Posterior cingulate gyrus (tissue), 11 donors: ENCODE measurements at regions of chr14 and their contacts with region 1.

Region 1: GRCh38 chr14:67695394-67695949 is at the start of gene RDH11:
- DNase-seq: peak; percentile 82 to 98 (median 90)

Region 2: DNA sequence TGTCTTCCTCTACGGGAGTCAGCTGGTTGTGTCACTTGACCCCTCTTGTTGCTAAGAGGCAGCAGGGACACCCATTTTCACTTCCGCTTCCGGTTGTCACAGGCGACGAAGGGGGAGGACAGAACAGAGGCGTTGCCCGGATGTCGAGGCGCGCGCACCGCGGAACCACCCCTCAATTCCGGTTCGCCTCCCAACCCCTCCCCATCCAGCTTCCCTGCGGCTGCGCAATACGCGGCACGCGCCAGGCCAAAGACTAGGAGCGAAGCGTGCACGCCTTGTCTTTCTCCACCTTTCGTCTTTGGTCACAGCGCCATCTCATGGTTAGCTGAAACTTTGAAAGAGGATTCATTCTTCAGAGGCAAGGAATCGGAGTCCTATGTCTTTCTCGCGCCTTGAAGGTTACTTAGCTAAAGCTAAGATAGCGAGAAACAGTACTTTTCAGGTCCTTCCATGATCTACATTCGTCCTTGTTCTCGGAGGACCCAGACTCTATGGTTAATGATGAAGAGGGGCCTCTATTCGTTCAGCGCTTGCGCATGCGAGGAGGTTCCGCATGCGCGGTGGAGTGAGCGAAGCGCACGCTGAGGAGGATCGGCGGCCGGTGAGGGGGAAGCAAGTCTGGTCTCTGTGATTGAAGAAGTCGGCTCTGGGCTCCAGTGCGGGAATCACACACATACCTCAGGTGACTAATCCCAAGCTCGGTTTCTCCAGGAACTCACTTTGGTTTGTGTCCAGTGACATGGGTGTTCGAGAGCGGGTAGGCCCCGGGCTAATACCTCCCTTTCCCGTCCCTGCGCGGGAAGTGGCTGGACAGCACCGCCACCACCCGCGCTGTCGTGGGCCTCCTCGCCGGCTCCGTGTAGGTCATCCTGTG is 335.5 kb before region 1 on chr14 and contains the starts of genes ATP6V1D and EIF2S1:
- intact Hi-C with region 1: loop called (anchors 10 kb)
- DNase-seq: peak; percentile 98 to 100 (median 99)

Region 3: GRCh38 chr14:67674481-67675169 is 20.8 kb before region 1 on chr14 and contains the start of gene VTI1B:
- intact Hi-C with region 1: loop called (anchors 2 kb)
- DNase-seq: peak; percentile 73 to 96 (median 78)

Region 4: DNA sequence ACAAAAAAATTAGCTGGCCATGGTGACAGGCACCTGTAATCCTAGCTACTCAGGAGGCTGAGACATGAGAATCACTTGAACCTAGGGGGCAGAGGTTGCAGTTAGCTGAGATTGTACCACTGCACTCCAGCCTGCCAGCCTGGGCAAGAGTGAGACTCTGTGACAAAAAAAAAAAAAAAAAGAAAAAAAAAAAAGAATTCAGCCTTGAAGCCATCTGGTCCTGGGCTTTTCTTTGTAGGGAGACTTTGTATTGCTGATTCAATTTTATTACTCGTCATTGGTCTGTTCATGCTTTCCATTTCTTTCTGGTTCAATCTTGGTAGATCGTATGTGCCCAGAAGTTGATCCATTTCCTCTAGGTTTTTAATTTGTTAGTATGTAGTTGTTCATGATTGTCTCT is 367.2 kb after region 1 on chr14:
- intact Hi-C with region 1: no loop called
- DNase-seq: no peak